HepG2 (cell line): ENCODE measurements at regions of chr6 and their contacts with region 1.

Region 1: GRCh38 chr6:151121900-151122299 is 117.9 kb upstream of the AKAP12 start:
- DNase-seq: no peak
- ATAC-seq: no peak
- H3K4me3 ChIP-seq: no peak overlapping the region
- H3K27ac ChIP-seq: no peak overlapping the region
- H3K4me1 ChIP-seq: peaks cover 63% of the 10 kb centered on the region
- H3K27me3 ChIP-seq: no peaks in the 10 kb centered on the region
- CTCF ChIP-seq: no peak
- EP300 ChIP-seq: no peak
- POLR2A ChIP-seq: no peak
- RAD21 ChIP-seq: no peak

Region 2: DNA sequence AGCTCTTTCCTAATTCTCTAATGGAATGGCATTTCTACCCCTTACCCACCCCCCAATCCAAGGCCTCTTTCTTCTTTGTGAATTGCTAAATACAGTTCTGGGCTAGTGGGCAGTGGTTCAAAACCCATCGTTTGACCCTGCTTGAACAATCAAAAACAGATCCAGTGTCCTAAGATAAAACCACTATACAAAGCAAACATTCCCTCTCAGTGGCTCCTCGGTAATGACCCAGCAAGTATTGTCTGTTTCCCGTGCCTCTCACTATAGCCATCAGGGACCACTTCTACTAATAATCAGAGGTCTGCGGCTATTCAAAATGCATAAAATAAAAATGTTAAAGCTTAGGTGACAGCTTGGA is 25.7 kb before region 1 on chr6:
- CTCF ChIA-PET with region 1: no interaction called
- POLR2A ChIA-PET with region 1: interaction called, 5 read pairs
- in situ Hi-C with region 1: no loop called
- intact Hi-C with region 1: loop called (anchors 1 kb)
- DNase-seq: peak; percentile 97
- ATAC-seq: peak; percentile 96
- H3K4me3 ChIP-seq: peak overlapping the region in 1 of 3 experiments; percentile 28; a peak in 1 of 6 replicates
- H3K27ac ChIP-seq: peak overlapping the region; percentile 66
- H3K4me1 ChIP-seq: peaks cover 30% of the 10 kb centered on the region
- H3K27me3 ChIP-seq: no peaks in the 10 kb centered on the region
- CTCF ChIP-seq: no peak
- EP300 ChIP-seq: peak; percentile 76 to 91
- POLR2A ChIP-seq: no peak
- RAD21 ChIP-seq: no peak; the same call in 1 of the 2 replicates

Region 3: GRCh38 chr6:151229401-151230276 is 107.7 kb after region 1 on chr6:
- CTCF ChIA-PET with region 1: no interaction called
- POLR2A ChIA-PET with region 1: no interaction called
- in situ Hi-C with region 1: no loop called
- intact Hi-C with region 1: no loop called
- DNase-seq: no peak
- ATAC-seq: no peak
- H3K4me3 ChIP-seq: no peak overlapping the region
- H3K27ac ChIP-seq: no peak overlapping the region
- H3K4me1 ChIP-seq: no peaks in the 10 kb centered on the region; the same call in 1 of the 2 replicates
- H3K27me3 ChIP-seq: no peaks in the 10 kb centered on the region; a peak in 1 of 5 replicates
- CTCF ChIP-seq: no peak
- EP300 ChIP-seq: no peak
- POLR2A ChIP-seq: no peak
- RAD21 ChIP-seq: no peak

Region 4: GRCh38 chr6:151436802-151437201 is 314.9 kb after region 1 on chr6:
- CTCF ChIA-PET with region 1: no interaction called
- POLR2A ChIA-PET with region 1: no interaction called
- in situ Hi-C with region 1: no loop called
- intact Hi-C with region 1: no loop called
- DNase-seq: peak; percentile 61
- ATAC-seq: peak; percentile 68
- H3K4me3 ChIP-seq: peak overlapping the region in 1 of 3 experiments; percentile 11; a peak in 1 of 6 replicates
- H3K27ac ChIP-seq: peak overlapping the region; percentile 67
- H3K4me1 ChIP-seq: peaks cover 57% of the 10 kb centered on the region
- H3K27me3 ChIP-seq: no peaks in the 10 kb centered on the region
- CTCF ChIP-seq: no peak
- EP300 ChIP-seq: peak in 1 of 2 experiments; percentile 38; a peak in 1 of 4 replicates
- POLR2A ChIP-seq: no peak
- RAD21 ChIP-seq: no peak